GM12878 (cell line): ENCODE measurements at regions of chr5 and their contacts with region 1.

Region 1: GRCh38 chr5:131514316-131515283 is 120.4 kb downstream of the RAPGEF6 start:
- DNase-seq: no peak
- ATAC-seq: peak; percentile 71
- H3K4me3 ChIP-seq: no peak overlapping the region
- H3K27ac ChIP-seq: peak overlapping the region; percentile 67
- H3K4me1 ChIP-seq: peaks cover 14% of the 10 kb centered on the region
- H3K27me3 ChIP-seq: no peaks in the 10 kb centered on the region
- CTCF ChIP-seq: peak in 1 of 3 experiments; percentile 23; a peak in 1 of 6 replicates
- EP300 ChIP-seq: no peak
- POLR2A ChIP-seq: no peak
- RAD21 ChIP-seq: peak; percentile 28; the same call in 1 of the 2 replicates

Region 2: DNA sequence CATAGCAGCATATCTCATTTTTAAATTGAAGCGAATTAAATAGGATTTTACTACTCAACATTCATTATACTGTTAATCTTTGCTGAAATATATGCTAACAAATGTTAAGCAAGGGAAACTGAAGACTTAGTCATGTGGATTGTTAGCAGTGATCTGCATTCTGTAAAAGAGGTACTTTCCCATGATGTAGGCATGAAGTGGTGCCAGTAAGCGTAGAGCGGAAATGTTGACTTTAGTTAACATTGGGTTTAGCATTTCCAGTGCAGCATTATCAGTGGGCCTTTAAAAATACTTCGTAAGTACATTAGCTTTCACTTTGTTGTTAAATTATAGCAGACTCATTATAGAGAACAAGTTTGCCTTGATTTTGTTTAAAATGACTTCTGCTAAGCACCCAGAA is 120.5 kb before region 1 on chr5:
- CTCF ChIA-PET with region 1: no interaction called
- POLR2A ChIA-PET with region 1: no interaction called
- RAD21 ChIA-PET with region 1: no interaction called
- SMC1A ChIA-PET with region 1: no interaction called
- in situ Hi-C with region 1: no loop called
- intact Hi-C with region 1: no loop called
- DNase-seq: peak; percentile 66
- ATAC-seq: peak; percentile 84
- H3K4me3 ChIP-seq: no peak overlapping the region
- H3K27ac ChIP-seq: peak overlapping the region; percentile 55
- H3K4me1 ChIP-seq: peaks cover 29% of the 10 kb centered on the region
- H3K27me3 ChIP-seq: no peaks in the 10 kb centered on the region
- CTCF ChIP-seq: no peak
- EP300 ChIP-seq: no peak
- POLR2A ChIP-seq: no peak
- RAD21 ChIP-seq: no peak

Region 3: GRCh38 chr5:131496400-131497007 is 18.1 kb before region 1 on chr5:
- CTCF ChIA-PET with region 1: interaction called, 8 read pairs
- POLR2A ChIA-PET with region 1: interaction called, 4 read pairs
- RAD21 ChIA-PET with region 1: interaction called, 3 read pairs
- SMC1A ChIA-PET with region 1: interaction called, 12 read pairs
- in situ Hi-C with region 1: no loop called
- intact Hi-C with region 1: no loop called
- DNase-seq: peak; percentile 51
- ATAC-seq: peak; percentile 99
- H3K4me3 ChIP-seq: no peak overlapping the region
- H3K27ac ChIP-seq: peak overlapping the region; percentile 13; the same call in 1 of the 2 replicates
- H3K4me1 ChIP-seq: peaks cover 9% of the 10 kb centered on the region; the same call in 1 of the 2 replicates
- H3K27me3 ChIP-seq: no peaks in the 10 kb centered on the region
- CTCF ChIP-seq: peak; percentile 42 to 53 (median 51); a peak in 5 of 6 replicates
- EP300 ChIP-seq: peak in 1 of 2 experiments; percentile 77; a peak in 1 of 4 replicates
- POLR2A ChIP-seq: no peak
- RAD21 ChIP-seq: peak; percentile 30; the same call in 1 of the 2 replicates